IMR-90 (cell line): ENCODE measurements at regions of chr15 and their contacts with region 1.

Region 1: DNA sequence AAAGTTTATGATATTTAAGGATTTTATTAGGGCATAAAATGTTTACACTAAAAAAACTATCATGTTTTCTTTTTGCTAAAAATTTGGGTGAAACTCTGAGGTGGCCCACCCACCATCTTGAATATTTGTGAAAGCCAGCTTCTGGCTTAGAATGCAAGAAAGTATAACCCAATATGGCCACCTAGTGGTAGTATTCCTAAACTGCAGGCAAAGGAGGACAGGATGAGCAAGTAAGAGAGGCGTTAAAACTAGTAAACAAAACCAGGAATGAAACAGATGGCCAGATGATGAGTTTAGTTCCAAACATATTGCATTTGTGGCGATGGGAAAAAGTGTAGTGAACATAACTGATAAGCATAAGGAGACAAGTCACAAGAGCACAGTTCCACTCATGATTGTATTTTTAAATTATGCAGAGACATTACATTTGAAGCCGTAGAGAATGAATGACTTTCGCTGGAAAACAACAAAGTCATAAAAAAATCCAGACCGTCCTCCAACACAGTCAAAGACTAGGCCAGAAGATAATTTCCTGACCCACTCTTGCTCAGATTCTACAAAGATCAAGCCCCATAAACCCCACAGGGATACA is 103.3 kb upstream of the PRTG start:
- DNase-seq: peak; percentile 88
- ATAC-seq: peak; percentile 97
- H3K4me3 ChIP-seq: no peak overlapping the region
- H3K27ac ChIP-seq: no peak overlapping the region
- H3K4me1 ChIP-seq: no peaks in the 10 kb centered on the region
- H3K27me3 ChIP-seq: no peaks in the 10 kb centered on the region
- CTCF ChIP-seq: peak; percentile 87
- POLR2A ChIP-seq: no peak
- RAD21 ChIP-seq: peak; percentile 68

Region 2: GRCh38 chr15:55897560-55898336 is 51.5 kb after region 1 on chr15:
- CTCF ChIA-PET with region 1: interaction called, 4 read pairs
- POLR2A ChIA-PET with region 1: no interaction called
- dilution Hi-C with region 1: no loop called
- in situ Hi-C with region 1: no loop called
- intact Hi-C with region 1: loop called (anchors 2 kb)
- DNase-seq: peak; percentile 61
- ATAC-seq: peak; percentile 87
- H3K4me3 ChIP-seq: no peak overlapping the region
- H3K27ac ChIP-seq: peak overlapping the region; percentile 67
- H3K4me1 ChIP-seq: peaks cover 9% of the 10 kb centered on the region
- H3K27me3 ChIP-seq: no peaks in the 10 kb centered on the region
- CTCF ChIP-seq: peak; percentile 69
- POLR2A ChIP-seq: no peak
- RAD21 ChIP-seq: peak; percentile 52

Region 3: GRCh38 chr15:56146756-56147155 is 300.5 kb after region 1 on chr15:
- CTCF ChIA-PET with region 1: no interaction called
- POLR2A ChIA-PET with region 1: no interaction called
- dilution Hi-C with region 1: no loop called
- in situ Hi-C with region 1: no loop called
- intact Hi-C with region 1: no loop called
- DNase-seq: peak; percentile 37
- ATAC-seq: peak; percentile 47
- H3K4me3 ChIP-seq: no peak overlapping the region
- H3K27ac ChIP-seq: no peak overlapping the region
- H3K4me1 ChIP-seq: 0 out of 2 replicates have a peak, but pooled peaks cover 3% of the 10 kb centered on the region
- H3K27me3 ChIP-seq: no peaks in the 10 kb centered on the region
- CTCF ChIP-seq: no peak
- POLR2A ChIP-seq: no peak
- RAD21 ChIP-seq: no peak